ENCODE measurements at regions of chr9 and their contacts with region 1.

Region 1: GRCh38 chr9:21434202-21435014 is 5.8 kb upstream of the IFNA1 start:
- DNase-seq: peak; percentile 76
- ATAC-seq: no peak
- H3K4me3 Mint-ChIP-seq: no peak overlapping the region
- H3K27ac Mint-ChIP-seq: no peak overlapping the region
- H3K4me1 Mint-ChIP-seq: no peaks in the 10 kb centered on the region
- H3K27me3 Mint-ChIP-seq: peaks cover 15% of the 10 kb centered on the region
- CTCF ChIP-seq: peak; percentile 40

Region 2: GRCh38 chr9:20854444-20854843 is 580.0 kb before region 1 on chr9:
- CTCF ChIA-PET with region 1: no interaction called
- POLR2A ChIA-PET with region 1: no interaction called
- intact Hi-C with region 1: no loop called
- DNase-seq: no peak
- ATAC-seq: no peak
- H3K4me3 Mint-ChIP-seq: no peak overlapping the region
- H3K27ac Mint-ChIP-seq: no peak overlapping the region
- H3K4me1 Mint-ChIP-seq: no peaks in the 10 kb centered on the region
- H3K27me3 Mint-ChIP-seq: no peaks in the 10 kb centered on the region
- CTCF ChIP-seq: no peak

Region 3: DNA sequence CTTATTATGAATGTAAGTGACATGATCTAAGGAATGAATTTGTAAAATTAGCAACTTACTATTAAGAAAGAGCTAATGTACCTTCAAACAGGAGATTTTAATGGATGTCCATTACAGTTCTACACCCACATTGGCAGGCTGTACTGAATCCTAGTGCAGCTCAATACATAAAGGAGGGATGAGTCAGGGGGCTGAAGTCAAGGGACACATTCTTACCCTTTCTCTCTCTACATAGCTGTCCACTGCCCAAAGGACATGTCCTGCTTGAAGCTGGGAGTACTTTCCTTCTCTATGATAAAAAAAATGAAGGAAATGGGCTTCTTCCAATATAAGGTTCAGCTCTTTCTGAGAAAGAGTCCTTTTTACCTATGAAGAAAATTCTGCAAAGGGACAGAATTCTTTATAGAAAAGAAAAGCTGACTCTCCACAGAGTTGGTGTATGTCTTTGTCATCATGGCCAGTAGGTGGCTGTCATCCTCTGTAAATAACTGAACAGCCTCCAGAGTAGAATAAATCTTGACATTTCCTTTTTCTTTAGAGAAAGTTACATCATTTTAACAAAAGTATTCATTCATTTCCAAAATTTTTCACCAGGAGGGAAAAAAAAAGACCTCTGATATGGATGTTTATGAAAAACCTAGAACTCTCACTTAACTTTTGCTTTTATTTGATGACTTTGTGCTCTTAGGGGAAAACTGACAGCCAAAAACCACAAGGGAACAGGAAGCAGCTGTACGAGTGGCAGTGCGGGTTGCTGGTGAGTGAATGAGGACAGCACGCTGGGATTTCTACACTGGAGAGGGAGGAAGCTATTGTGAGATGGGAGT is 181.5 kb before region 1 on chr9:
- CTCF ChIA-PET with region 1: interaction called, 10 read pairs
- POLR2A ChIA-PET with region 1: no interaction called
- intact Hi-C with region 1: no loop called
- DNase-seq: peak; percentile 37
- ATAC-seq: peak; percentile 67
- H3K4me3 Mint-ChIP-seq: no peak overlapping the region
- H3K27ac Mint-ChIP-seq: no peak overlapping the region
- H3K4me1 Mint-ChIP-seq: peaks cover 5% of the 10 kb centered on the region
- H3K27me3 Mint-ChIP-seq: peaks cover 3% of the 10 kb centered on the region
- CTCF ChIP-seq: peak; percentile 56

Region 4: GRCh38 chr9:21455320-21455719 is 20.9 kb after region 1 on chr9:
- CTCF ChIA-PET with region 1: interaction called, 14 read pairs
- POLR2A ChIA-PET with region 1: no interaction called
- intact Hi-C with region 1: no loop called
- DNase-seq: peak; percentile 20
- ATAC-seq: peak; percentile 82
- H3K4me3 Mint-ChIP-seq: no peak overlapping the region
- H3K27ac Mint-ChIP-seq: no peak overlapping the region
- H3K4me1 Mint-ChIP-seq: no peaks in the 10 kb centered on the region
- H3K27me3 Mint-ChIP-seq: peaks cover 4% of the 10 kb centered on the region
- CTCF ChIP-seq: peak; percentile 63

Region 5: GRCh38 chr9:21831961-21832509 is 397.6 kb after region 1 on chr9:
- CTCF ChIA-PET with region 1: no interaction called
- POLR2A ChIA-PET with region 1: no interaction called
- intact Hi-C with region 1: no loop called
- DNase-seq: peak; percentile 59
- ATAC-seq: peak; percentile 96
- H3K4me3 Mint-ChIP-seq: no peak overlapping the region
- H3K27ac Mint-ChIP-seq: peak overlapping the region; percentile 53
- H3K4me1 Mint-ChIP-seq: peaks cover 40% of the 10 kb centered on the region
- H3K27me3 Mint-ChIP-seq: no peaks in the 10 kb centered on the region
- CTCF ChIP-seq: no peak

Measured in activated CD8-positive, alpha-beta T cell treated with anti-CD3 and anti-CD28 coated beads for 36 hours (primary cell).